ENCODE measurements at regions of chr11 and their contacts with region 1.

Region 1: DNA sequence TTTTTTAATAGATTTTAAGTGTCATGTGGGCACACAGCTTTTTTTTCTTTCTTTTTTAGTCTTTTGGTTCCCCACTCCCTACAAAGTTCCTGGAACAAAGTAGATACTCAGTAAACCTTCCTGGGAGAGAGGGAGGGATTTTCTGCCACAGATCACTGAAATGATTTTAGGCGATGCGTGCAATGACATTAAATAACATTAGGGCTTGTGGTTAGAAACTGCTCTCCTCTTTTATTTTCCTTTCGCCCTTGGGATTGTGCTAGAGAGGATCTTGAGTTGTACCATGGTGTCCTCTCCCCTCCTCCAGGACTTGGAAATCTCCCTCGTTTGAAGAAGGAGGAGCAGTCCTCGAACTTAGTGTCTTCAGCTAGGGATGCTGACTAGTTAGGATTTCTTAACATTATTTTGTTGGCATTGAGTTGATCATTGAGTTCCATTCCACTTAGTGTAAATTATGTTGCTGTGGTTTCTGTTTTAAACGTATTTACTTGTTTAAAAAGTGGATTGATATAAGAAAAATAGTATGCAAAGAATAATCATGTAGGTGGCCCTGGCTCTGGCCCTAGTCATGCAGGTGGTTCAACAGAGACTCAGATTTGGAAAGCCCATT is 88.4 kb downstream of the TRAF6 start:
- DNase-seq: no peak
- H3K4me3 Mint-ChIP-seq: peak overlapping the region; percentile 75
- H3K27ac Mint-ChIP-seq: peak overlapping the region; percentile 91
- H3K4me1 Mint-ChIP-seq: peaks cover 63% of the 10 kb centered on the region
- H3K27me3 Mint-ChIP-seq: no peaks in the 10 kb centered on the region

Region 2: GRCh38 chr11:36390963-36391471 is 30.6 kb before region 1 on chr11:
- intact Hi-C with region 1: loop called (anchors 1 kb)
- DNase-seq: no peak
- H3K4me3 Mint-ChIP-seq: peak overlapping the region; percentile 47
- H3K27ac Mint-ChIP-seq: peak overlapping the region; percentile 80
- H3K4me1 Mint-ChIP-seq: peaks cover 64% of the 10 kb centered on the region
- H3K27me3 Mint-ChIP-seq: no peaks in the 10 kb centered on the region